PC-3 (cell line): ENCODE measurements at regions of chr3 and their contacts with region 1.

Region 1: DNA sequence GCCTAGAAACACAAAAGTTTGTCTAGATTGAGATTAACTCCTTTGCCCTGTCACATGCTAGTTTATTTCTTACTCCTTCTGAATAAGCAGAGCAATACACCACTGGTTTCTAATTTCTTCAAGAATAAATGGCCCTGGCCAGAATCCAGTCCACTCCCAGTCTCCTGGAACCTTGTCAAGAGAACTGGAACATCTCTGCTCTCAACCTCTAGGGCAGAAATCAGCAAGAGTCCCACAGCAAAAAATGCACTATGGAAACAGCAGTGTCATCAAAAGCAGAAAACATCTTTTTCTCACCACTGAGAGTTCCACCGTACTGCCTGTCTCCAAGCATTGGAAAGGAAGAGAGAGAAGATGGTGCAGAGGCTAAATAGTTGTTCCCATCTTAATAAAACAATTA is 35.9 kb upstream of the PPP2R3A start:
- DNase-seq: peak; percentile 53
- ATAC-seq: peak; percentile 20; the same call in 1 of the 2 replicates
- H3K4me3 ChIP-seq: no peak overlapping the region
- H3K27ac ChIP-seq: no peak overlapping the region
- H3K4me1 ChIP-seq: peaks cover 16% of the 10 kb centered on the region
- H3K27me3 ChIP-seq: no peaks in the 10 kb centered on the region
- CTCF ChIP-seq: no peak

Region 2: GRCh38 chr3:137925080-137925479 is 1995.4 kb after region 1 on chr3:
- CTCF ChIA-PET with region 1: no interaction called
- POLR2A ChIA-PET with region 1: interaction called, 11 read pairs
- intact Hi-C with region 1: no loop called
- DNase-seq: no peak
- ATAC-seq: no peak
- H3K4me3 ChIP-seq: no peak overlapping the region
- H3K27ac ChIP-seq: no peak overlapping the region
- H3K4me1 ChIP-seq: no peaks in the 10 kb centered on the region
- H3K27me3 ChIP-seq: peaks cover 5% of the 10 kb centered on the region; the same call in 1 of the 2 replicates
- CTCF ChIP-seq: no peak